Astrocyte of the cerebellum (primary cell): ENCODE measurements at regions of chr5 and their contacts with region 1.

Region 1: DNA sequence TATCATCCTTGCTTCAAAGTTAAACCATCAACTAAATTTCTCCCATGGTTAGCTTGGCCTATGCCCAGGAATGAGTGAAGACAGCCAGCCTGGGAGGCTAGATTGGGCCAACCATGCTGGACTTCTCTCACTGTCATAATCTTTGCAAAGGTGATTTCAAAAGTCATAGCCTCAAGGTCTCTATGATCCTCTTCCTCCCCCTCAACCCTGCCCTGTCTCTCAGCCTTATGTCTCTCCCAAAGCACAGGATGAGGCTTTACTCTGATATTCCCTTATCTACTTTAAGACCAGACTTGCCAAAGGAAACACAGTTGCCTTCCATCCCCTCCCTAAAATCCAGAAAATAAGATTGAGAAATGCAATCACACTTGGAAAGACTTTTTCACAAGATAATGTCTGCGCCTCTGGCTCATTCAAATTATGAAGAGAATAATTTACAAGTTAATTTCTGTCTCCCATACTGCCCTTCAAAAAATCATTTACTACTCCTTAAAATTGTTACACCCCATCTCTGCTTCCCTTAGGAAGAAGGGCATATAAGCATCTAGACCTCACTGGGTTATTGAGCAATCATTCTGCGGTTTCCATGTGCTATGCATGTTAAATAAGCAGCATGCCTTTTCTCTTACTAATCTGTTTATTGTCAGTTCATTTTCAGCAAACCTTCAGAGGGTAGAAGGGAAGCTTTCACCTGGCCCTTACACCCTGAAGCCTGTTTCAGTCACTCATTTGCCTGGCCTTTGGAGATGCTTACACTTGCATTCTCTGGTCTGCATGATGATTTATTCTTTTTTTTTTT is 113.8 kb upstream of the ANKRD55 start:
- DNase-seq: peak; percentile 93
- H3K4me3 ChIP-seq: no peak overlapping the region
- CTCF ChIP-seq: no peak

Region 2: GRCh38 chr5:55959208-55959607 is 387.7 kb before region 1 on chr5:
- in situ Hi-C with region 1: no loop called
- DNase-seq: no peak
- H3K4me3 ChIP-seq: no peak overlapping the region
- CTCF ChIP-seq: no peak

Region 3: DNA sequence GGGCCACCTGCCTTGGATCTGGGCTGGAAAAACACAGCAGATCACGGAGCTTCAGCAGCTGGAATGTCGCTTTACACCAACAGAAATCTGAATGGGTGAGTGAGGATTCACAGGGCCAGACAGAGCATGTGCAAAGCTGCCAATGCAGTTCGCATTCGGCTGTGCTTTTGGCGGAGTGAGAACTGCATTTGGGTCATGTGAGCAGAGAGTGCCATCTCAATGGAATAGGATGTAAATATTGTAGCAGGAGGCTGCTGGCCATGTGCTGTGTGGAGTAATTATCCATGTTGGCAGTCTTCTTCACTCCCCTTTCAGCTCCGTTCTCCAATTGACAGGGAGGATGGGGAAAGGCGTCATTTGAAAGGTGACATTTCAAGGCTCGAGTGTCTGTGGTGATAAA is 113.7 kb before region 1 on chr5 and contains the start of gene ANKRD55:
- in situ Hi-C with region 1: no loop called
- DNase-seq: no peak
- H3K4me3 ChIP-seq: no peak within 1 kb of the TSS
- CTCF ChIP-seq: no peak

Region 4: DNA sequence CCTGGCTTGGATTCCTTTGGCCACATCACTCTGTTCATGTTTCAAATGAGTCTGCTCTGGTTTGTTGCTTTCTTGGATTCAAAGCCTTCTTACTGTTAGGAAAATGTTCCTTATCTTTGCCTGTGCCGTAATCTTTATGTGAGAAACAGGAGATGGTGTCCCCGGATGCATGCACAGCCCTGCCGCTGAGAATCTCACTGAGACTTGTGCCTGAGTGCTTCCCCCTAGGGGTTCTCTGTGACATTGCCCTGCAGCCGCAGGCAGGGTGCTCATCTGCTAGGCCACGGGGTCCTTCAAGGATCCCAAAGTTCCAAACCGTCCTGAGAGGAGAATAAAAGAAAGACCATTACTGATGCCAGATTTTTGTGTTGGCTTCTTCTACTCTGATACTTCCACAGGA is 32.4 kb before region 1 on chr5:
- in situ Hi-C with region 1: loop called (anchors 5 kb)
- DNase-seq: no peak
- H3K4me3 ChIP-seq: no peak overlapping the region
- CTCF ChIP-seq: peak; percentile 11